Activated B cell treated with CpG ODN at 0.5 μM for 24 hours (primary cell): ENCODE measurements at regions of chr19 and their contacts with region 1.

Region 1: GRCh38 chr19:52428937-52429336 is at the start of gene ZNF534:
- DNase-seq: no peak
- ATAC-seq: no peak
- H3K4me3 Mint-ChIP-seq: no peak within 1 kb of the TSS
- H3K27ac Mint-ChIP-seq: no peak within 1 kb of the TSS
- H3K4me1 Mint-ChIP-seq: no peaks in the 10 kb centered on the region
- H3K27me3 Mint-ChIP-seq: no peaks in the 10 kb centered on the region
- CTCF ChIP-seq: no peak
- total RNA-seq, gene ZNF534: 0.16 TPM in 1 of 2 replicates, not detected in the other

Region 2: DNA sequence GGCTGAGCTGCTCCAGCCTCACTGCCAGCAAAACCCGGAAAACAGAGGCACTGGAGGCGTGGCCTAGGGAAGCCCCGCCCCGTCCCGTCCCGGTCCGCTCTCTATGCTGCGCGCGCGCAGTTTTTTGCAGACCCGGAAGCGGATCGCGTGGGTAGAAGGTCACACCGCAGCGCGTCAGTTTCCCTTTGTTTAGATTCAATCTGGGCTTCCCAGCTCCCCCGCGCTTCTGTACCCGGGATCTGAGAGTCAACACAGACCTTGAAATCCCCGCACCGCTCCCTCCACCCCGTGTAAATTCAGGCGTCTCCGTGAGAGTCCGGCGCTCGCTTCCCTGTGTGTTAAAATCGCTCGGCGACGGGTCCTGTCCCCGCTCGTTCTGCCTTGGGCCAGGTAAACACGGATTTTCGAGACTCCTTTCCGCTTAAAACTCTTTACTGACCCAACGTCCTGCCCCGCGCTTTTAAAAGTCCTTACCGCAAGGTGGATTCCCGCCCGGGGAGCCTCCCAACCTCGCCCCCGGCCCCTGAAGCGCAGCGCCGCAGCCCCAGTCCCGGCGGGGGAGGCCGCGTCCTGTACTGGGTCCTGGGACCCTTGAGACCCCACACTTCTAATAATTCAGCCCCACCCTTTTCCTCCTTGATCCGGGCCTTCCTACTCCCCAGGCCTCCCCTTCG is 92.7 kb before region 1 on chr19 and contains the start of gene ZNF610:
- CTCF ChIA-PET with region 1: no interaction called
- POLR2A ChIA-PET with region 1: interaction called, 12 read pairs
- intact Hi-C with region 1: no loop called
- DNase-seq: peak; percentile 84
- ATAC-seq: peak; percentile 96
- H3K4me3 Mint-ChIP-seq: peak within 1 kb of the TSS; percentile 97
- H3K27ac Mint-ChIP-seq: peak within 1 kb of the TSS; percentile 93
- H3K4me1 Mint-ChIP-seq: peaks cover 14% of the 10 kb centered on the region
- H3K27me3 Mint-ChIP-seq: no peaks in the 10 kb centered on the region
- CTCF ChIP-seq: no peak
- total RNA-seq, gene ZNF610: 1.1 and 2.0 TPM in 2 replicates

Region 3: DNA sequence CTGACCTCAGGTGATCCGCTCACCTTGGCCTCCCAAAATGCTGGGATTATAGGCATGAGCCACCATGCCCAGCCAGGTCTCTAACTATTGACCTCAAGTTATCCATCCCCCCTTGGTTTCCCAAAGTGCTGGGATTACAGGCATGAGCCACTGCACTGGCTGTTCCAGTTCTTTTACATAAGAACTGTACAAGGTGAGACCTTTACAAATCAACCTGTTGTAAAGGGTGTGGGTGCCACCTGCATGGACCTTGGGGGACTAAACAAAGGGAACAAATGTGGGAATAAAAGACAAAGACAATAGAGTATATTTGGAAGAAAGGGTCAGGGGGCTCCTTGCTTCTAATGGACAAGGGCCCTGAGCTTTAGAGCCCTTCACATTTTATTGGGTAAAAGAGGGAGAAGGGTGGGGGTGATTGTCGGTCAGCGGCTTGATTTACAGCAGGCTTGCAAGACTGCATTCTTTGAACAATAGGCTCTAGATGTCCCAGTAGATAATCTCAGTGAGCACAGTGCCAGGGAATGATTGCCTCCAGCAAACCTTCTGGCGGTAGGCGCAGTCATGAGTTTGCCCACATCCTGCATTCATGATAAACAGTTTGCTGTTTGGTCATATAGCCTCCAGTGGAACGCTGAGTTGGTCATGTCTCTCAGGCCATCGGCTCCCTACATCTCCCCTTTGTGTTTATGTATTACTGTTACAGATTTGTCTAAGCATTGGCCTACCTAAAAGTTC is 18.8 kb before region 1 on chr19:
- CTCF ChIA-PET with region 1: no interaction called
- POLR2A ChIA-PET with region 1: no interaction called
- intact Hi-C with region 1: no loop called
- DNase-seq: no peak
- ATAC-seq: no peak
- H3K4me3 Mint-ChIP-seq: no peak overlapping the region
- H3K27ac Mint-ChIP-seq: no peak overlapping the region
- H3K4me1 Mint-ChIP-seq: no peaks in the 10 kb centered on the region
- H3K27me3 Mint-ChIP-seq: no peaks in the 10 kb centered on the region
- CTCF ChIP-seq: no peak